ENCODE measurements at regions of chr12 and their contacts with region 1.

Region 1: DNA sequence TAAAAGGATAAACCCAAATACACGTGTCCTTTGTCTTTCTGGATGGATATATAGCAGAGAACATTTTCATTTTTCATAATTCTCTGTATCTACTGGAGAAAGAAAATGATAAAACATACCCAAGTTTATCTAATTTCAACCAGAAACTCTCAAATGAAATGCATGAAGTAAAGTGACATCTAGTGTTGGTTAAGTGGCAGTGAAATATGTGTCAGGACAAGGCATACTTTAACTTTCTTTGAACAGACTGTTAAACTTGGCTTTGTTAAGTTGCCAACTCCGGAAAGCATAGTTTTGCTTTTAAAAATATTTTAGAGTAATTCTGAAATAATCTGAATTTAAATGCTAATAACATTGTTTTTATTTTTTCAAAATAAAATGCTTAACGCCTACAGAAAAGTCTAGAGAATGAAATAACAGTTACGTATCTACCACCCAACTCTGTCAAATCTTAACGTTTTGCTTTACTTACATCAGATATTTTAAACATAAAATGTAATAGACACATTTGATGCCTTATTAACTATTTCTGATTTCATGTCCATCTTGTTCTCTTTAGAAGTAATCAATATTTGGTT is 25.2 kb upstream of the NTN4 start:
- DNase-seq: no peak
- ATAC-seq: no peak
- H3K4me3 ChIP-seq: no peak overlapping the region
- H3K27ac ChIP-seq: no peak overlapping the region
- H3K4me1 ChIP-seq: no peaks in the 10 kb centered on the region
- H3K27me3 ChIP-seq: no peaks in the 10 kb centered on the region
- CTCF ChIP-seq: peak; percentile 62

Region 2: DNA sequence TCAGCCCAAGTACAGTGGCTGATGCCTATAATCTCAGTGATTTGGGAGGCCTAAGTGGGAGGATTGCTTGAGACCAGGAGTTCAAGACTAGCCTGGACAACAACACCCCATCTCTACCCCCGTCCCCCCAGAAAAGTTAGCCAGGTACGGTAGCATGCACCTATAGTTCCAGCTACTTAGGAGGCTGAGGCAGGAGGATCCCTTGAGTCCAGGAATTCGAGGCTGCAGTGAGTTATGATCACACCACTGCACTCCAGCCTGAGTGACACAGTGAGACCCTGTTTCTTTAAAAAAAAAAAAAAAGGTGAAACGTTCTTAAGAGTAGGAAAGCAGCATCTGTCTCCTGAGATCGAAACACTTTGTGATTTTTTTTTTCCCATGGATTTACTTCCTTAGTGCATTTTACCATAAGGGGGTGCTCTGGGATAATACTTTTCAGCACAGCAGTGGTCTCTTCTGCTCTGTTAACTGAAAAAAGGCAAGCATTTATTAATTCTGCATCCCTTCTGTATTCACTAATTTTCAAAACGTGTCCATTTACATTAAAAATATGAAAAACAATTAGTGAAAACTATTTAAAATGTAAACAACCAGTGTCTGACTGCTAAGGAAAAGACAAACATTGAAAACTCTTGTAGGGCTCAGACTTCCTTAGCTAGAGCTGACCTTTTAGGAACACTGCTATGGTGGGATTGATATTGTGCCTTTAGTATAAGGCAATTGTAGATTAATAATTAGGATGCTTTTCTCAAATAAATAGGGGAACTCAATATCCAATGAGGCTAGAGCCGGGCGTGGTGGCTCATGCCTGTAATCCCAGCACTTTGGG is 233.3 kb before region 1 on chr12:
- intact Hi-C with region 1: loop called (anchors 1 to 10 kb)
- DNase-seq: no peak
- ATAC-seq: no peak
- H3K4me3 ChIP-seq: no peak overlapping the region
- H3K27ac ChIP-seq: no peak overlapping the region
- H3K4me1 ChIP-seq: no peaks in the 10 kb centered on the region
- H3K27me3 ChIP-seq: peaks cover 0 to 4% (median 0%) of the 10 kb centered on the region in 3 donors
- CTCF ChIP-seq: peak; percentile 46

Region 3: DNA sequence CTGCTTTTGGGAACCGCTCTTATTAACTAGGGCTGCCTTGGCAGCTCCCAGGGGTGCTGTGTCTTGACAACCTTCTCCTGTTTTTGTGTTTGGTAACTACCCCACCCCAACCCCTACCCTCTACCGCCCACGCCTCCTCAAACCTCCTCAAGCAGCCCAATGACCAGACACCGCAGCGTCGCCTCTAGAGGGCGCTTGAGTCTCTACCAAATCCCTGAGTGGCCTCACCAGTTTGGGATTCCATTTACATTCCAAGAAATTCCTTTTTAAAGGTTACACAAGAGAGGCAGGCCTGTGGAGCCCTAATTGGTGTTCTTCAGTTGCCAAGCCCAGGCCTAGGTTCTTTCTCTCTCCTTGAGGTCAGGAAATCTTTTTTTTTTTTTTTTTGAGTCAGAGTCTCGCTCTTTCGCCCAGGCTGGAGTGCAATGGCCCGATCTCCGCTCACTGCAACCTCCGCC is 192.1 kb before region 1 on chr12:
- intact Hi-C with region 1: loop called in 1 of 2 experiments (anchors 5 kb)
- DNase-seq: peak; percentile 42 to 66
- ATAC-seq: peak in 3 of 4 donors; percentile 23 to 51 (median 30)
- H3K4me3 ChIP-seq: no peak overlapping the region
- H3K27ac ChIP-seq: no peak overlapping the region
- H3K4me1 ChIP-seq: no peaks in the 10 kb centered on the region
- H3K27me3 ChIP-seq: no peaks in the 10 kb centered on the region
- CTCF ChIP-seq: peak; percentile 29